Heart right ventricle (tissue), 16 donors: ENCODE measurements at regions of chr11 and their contacts with region 1.

Region 1: GRCh38 chr11:85694386-85694980 is 8.5 kb upstream of the CCDC89 start:
- DNase-seq: no peak
- ATAC-seq: no peak
- H3K4me3 ChIP-seq: no peak overlapping the region
- H3K27ac ChIP-seq: no peak overlapping the region
- H3K4me1 ChIP-seq: peaks cover 0 to 1% (median 0%) of the 10 kb centered on the region in 9 donors
- H3K27me3 ChIP-seq: no peaks in the 10 kb centered on the region
- CTCF ChIP-seq: peak in 8 of 9 donors; percentile 16 to 73 (median 60)

Region 2: GRCh38 chr11:85810871-85811611 is 116.6 kb after region 1 on chr11 and contains the start of gene SYTL2:
- intact Hi-C with region 1: loop called in 2 of 10 experiments (anchors 10 kb)
- DNase-seq: peak; percentile 58 to 80
- ATAC-seq: peak; percentile 95 to 99 (median 98)
- H3K4me3 ChIP-seq: peak within 1 kb of the TSS; percentile 49 to 82 (median 70)
- H3K27ac ChIP-seq: peak within 1 kb of the TSS in 7 of 10 donors; percentile 17 to 72 (median 30)
- H3K4me1 ChIP-seq: peaks cover 5 to 20% (median 12%) of the 10 kb centered on the region in 9 donors
- H3K27me3 ChIP-seq: peaks cover 0 to 20% (median 0%) of the 10 kb centered on the region in 7 donors
- CTCF ChIP-seq: peak in 3 of 9 donors; percentile 26 to 39 (median 35)
- total RNA-seq, gene SYTL2: 3.5 to 16.1 (median 5.3) TPM